ENCODE measurements at regions of chr14 and their contacts with region 1.

Region 1: GRCh38 chr14:66624299-66624937 is 116.5 kb downstream of the GPHN start:
- DNase-seq: peak; percentile 35
- ATAC-seq: no peak
- H3K4me3 ChIP-seq: no peak overlapping the region
- H3K4me3 Mint-ChIP-seq: no peak overlapping the region
- H3K27ac ChIP-seq: no peak overlapping the region
- H3K27ac Mint-ChIP-seq: no peak overlapping the region
- H3K4me1 ChIP-seq: no peaks in the 10 kb centered on the region
- H3K4me1 Mint-ChIP-seq: no peaks in the 10 kb centered on the region
- H3K27me3 ChIP-seq: no peaks in the 10 kb centered on the region
- H3K27me3 Mint-ChIP-seq: no peaks in the 10 kb centered on the region
- CTCF ChIP-seq: peak; percentile 68

Region 2: DNA sequence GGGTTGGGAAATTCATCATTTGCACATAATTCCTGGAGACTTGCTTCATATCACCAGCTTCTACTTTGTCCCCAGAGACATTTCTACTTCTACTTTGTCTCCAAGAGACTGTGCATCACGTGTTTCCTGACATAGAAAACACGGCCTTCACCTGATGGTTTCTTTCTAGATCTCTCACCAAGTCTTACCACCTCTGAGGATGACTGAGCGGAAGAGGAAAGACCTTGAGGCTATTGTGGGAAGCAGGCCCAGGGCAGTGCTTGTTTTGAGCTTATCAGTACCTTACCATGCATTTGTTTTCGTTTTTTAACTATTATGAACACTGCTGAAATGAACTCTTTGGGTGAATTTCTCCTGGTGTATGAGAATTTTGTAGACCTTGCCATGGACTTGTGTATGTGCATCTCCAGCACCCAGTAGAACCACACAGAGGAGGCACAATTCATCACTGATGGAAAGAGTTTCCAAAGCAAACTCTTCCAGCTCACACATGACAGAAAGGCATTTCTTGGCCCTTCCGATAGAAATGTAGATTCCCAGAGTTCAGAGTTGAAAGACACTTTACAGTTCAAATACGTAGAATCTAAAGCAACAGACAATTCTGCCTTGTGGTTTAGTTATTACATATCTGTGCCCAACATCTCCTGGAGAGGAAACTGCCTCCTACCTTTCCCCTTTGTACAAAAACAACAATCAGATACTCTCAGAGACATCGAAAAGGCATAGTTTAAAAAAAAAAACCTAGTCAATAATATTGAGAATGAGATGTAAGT is 777.2 kb before region 1 on chr14:
- CTCF ChIA-PET with region 1: no interaction called
- POLR2A ChIA-PET with region 1: no interaction called
- intact Hi-C with region 1: no loop called
- DNase-seq: peak; percentile 32
- ATAC-seq: peak; percentile 58
- H3K4me3 ChIP-seq: no peak overlapping the region
- H3K4me3 Mint-ChIP-seq: peak overlapping the region; percentile 1
- H3K27ac ChIP-seq: peak overlapping the region; percentile 1 to 60
- H3K27ac Mint-ChIP-seq: peak overlapping the region; percentile 66
- H3K4me1 ChIP-seq: peaks cover 11% of the 10 kb centered on the region in 2 donors
- H3K4me1 Mint-ChIP-seq: peaks cover 16% of the 10 kb centered on the region
- H3K27me3 ChIP-seq: peaks cover 0 to 8% (median under 1%) of the 10 kb centered on the region in 4 experiments
- H3K27me3 Mint-ChIP-seq: peaks cover 6% of the 10 kb centered on the region
- CTCF ChIP-seq: no peak

Region 3: DNA sequence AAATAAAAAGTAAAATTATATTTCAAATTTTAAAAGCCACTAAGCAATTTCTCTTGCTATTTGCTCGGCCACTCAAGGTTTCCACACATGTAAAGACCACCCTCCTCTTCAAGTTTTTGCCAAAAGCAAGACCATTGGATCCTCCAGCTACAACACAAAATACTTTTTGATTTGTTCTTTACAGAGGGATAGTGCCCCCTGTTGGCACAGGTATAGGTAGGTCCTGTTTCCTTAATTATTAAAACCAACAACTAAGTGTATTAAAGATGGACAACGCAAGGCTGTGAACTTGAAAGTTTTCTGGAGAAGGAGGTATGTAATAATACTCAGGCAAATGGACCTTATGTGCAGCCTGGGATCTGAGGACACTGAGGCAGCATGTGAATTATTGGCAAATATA is 711.4 kb after region 1 on chr14:
- CTCF ChIA-PET with region 1: no interaction called
- POLR2A ChIA-PET with region 1: no interaction called
- intact Hi-C with region 1: loop called (anchors 5 kb)
- DNase-seq: peak; percentile 31
- ATAC-seq: no peak
- H3K4me3 ChIP-seq: no peak overlapping the region
- H3K4me3 Mint-ChIP-seq: no peak overlapping the region
- H3K27ac ChIP-seq: no peak overlapping the region
- H3K27ac Mint-ChIP-seq: no peak overlapping the region
- H3K4me1 ChIP-seq: no peaks in the 10 kb centered on the region
- H3K4me1 Mint-ChIP-seq: no peaks in the 10 kb centered on the region
- H3K27me3 ChIP-seq: no peaks in the 10 kb centered on the region
- H3K27me3 Mint-ChIP-seq: no peaks in the 10 kb centered on the region
- CTCF ChIP-seq: peak; percentile 51

Measured in B cell (primary cell).